Activated CD4-positive, alpha-beta T cell treated with anti-CD3 and anti-CD28 coated beads, Interleukin-2, amount 10 ng/mL, durations not matched to agents 7 days and 5 days (primary cell): ENCODE measurements at regions of chr3 and their contacts with region 1.

Region 1: GRCh38 chr3:129224984-129225393 is 24.4 kb upstream of the COPG1 start:
- DNase-seq: peak; percentile 22
- H3K4me3 Mint-ChIP-seq: peak overlapping the region; percentile 40
- H3K27ac Mint-ChIP-seq: peak overlapping the region; percentile 86
- H3K4me1 Mint-ChIP-seq: peaks cover 49% of the 10 kb centered on the region
- H3K27me3 Mint-ChIP-seq: no peaks in the 10 kb centered on the region

Region 2: DNA sequence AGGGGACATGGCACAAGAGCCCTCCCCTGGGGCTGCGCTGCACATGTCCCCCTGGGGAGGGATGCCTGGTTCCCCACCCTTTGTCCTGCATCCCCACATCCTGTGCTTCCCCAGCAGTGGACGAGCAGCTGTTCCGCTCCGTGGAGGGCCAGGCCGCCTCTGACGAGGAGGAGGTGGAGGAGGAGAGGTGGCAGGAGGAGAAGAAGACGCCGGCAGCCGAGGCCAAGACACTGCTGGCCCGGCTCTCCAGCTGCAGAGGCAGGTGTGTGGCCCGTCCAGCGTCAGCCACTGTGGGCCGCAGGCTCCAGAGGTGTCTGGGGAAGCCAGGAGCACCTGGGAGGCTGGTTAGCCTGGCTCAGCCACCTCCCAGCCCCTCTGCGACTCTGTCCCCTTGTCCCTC is 192.3 kb before region 1 on chr3:
- CTCF ChIA-PET with region 1: no interaction called
- POLR2A ChIA-PET with region 1: interaction called, 14 read pairs
- DNase-seq: no peak
- H3K4me3 Mint-ChIP-seq: no peak overlapping the region
- H3K27ac Mint-ChIP-seq: no peak overlapping the region
- H3K4me1 Mint-ChIP-seq: peaks cover 17% of the 10 kb centered on the region
- H3K27me3 Mint-ChIP-seq: peaks cover 2% of the 10 kb centered on the region

Region 3: GRCh38 chr3:129238945-129239706 is 14.1 kb after region 1 on chr3:
- CTCF ChIA-PET with region 1: interaction called, 38 read pairs
- POLR2A ChIA-PET with region 1: no interaction called
- DNase-seq: peak; percentile 61
- H3K4me3 Mint-ChIP-seq: peak overlapping the region; percentile 28
- H3K27ac Mint-ChIP-seq: peak overlapping the region; percentile 93
- H3K4me1 Mint-ChIP-seq: peaks cover 54% of the 10 kb centered on the region
- H3K27me3 Mint-ChIP-seq: no peaks in the 10 kb centered on the region